Vagina (tissue), 2 donors: ENCODE measurements at regions of chr19 and their contacts with region 1.

Region 1: DNA sequence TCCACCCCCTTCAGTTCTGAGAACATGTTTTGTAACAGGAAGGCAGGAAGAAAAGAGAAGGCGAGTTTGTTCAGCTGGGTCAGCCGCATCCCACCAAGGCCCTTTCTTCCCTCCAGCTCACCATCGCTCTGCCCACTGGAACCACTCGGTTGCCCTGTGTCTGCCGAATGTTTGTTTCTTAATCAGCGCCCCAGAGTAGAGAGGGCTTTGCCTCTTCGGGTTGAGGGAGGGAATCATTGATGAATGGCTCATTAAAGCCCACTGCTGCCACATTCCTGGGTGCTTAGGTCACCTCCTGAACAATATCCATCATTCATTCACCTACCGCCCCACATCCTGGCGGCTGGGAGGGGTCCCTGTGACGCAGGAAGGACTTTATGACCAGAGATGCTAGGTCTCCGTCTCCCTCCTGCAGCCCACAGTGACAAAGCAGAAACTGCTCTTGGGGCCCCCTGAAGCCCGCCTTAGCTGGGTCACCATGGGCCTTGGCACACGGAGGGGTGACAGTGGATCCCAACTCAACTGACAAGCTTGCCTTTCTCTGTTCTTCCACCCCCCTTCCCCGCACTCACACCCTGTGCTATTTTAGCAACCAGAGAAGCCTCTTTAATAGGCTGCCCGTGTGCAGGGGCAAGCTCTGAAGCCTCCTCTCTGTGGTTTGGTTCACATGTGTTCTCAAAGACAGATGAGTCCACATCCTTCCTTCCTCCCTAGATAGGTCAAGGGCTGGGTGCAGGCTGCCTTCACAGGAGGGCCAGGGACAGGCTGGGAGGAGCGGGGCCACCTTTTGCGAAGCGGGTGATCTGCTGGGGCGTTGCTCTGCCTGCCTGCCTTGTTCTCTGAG is 46.2 kb downstream of the ACTN4 start:
- DNase-seq: no peak
- H3K4me3 ChIP-seq: no peak overlapping the region
- H3K27ac ChIP-seq: peak overlapping the region; percentile 90
- H3K4me1 ChIP-seq: peaks cover 85% of the 10 kb centered on the region
- H3K27me3 ChIP-seq: no peaks in the 10 kb centered on the region
- CTCF ChIP-seq: no peak
- POLR2A ChIP-seq: no peak

Region 2: GRCh38 chr19:38618590-38619360 is 74.8 kb before region 1 on chr19 and contains the start of gene EIF3K:
- intact Hi-C with region 1: no loop called
- DNase-seq: peak in 1 of 2 donors; percentile 99
- H3K4me3 ChIP-seq: peak within 1 kb of the TSS; percentile 82 to 98
- H3K27ac ChIP-seq: peak within 1 kb of the TSS; percentile 80
- H3K4me1 ChIP-seq: peaks cover 20% of the 10 kb centered on the region
- H3K27me3 ChIP-seq: no peaks in the 10 kb centered on the region
- CTCF ChIP-seq: no peak
- POLR2A ChIP-seq: no peak
- total RNA-seq, gene EIF3K: 349 TPM

Region 3: GRCh38 chr19:38658462-38659306 is 34.9 kb before region 1 on chr19:
- intact Hi-C with region 1: loop called (anchors 5 kb)
- DNase-seq: no peak
- H3K4me3 ChIP-seq: peak overlapping the region; percentile 5 to 15
- H3K27ac ChIP-seq: peak overlapping the region; percentile 97
- H3K4me1 ChIP-seq: peaks cover 100% of the 10 kb centered on the region
- H3K27me3 ChIP-seq: no peaks in the 10 kb centered on the region
- CTCF ChIP-seq: no peak
- POLR2A ChIP-seq: no peak